Left colon (tissue), 2 donors: ENCODE measurements at regions of chr1 and their contacts with region 1.

Region 1: GRCh38 chr1:167797015-167797414 is 75.2 kb downstream of the MPZL1 start:
- DNase-seq: peak in 1 of 2 donors; percentile 67
- ATAC-seq: peak; percentile 47

Region 2: GRCh38 chr1:167728818-167729410 is 68.1 kb before region 1 on chr1:
- intact Hi-C with region 1: loop called in 1 of 2 experiments (anchors 5 kb)
- DNase-seq: no peak
- ATAC-seq: no peak